ENCODE measurements at regions of chr18 and their contacts with region 1.

Region 1: GRCh38 chr18:21257386-21257785 is 15.4 kb downstream of the GREB1L start:
- DNase-seq: no peak
- ATAC-seq: no peak
- H3K4me3 ChIP-seq: no peak overlapping the region
- H3K27ac ChIP-seq: no peak overlapping the region
- H3K4me1 ChIP-seq: no peaks in the 10 kb centered on the region
- H3K27me3 ChIP-seq: no peaks in the 10 kb centered on the region

Region 2: DNA sequence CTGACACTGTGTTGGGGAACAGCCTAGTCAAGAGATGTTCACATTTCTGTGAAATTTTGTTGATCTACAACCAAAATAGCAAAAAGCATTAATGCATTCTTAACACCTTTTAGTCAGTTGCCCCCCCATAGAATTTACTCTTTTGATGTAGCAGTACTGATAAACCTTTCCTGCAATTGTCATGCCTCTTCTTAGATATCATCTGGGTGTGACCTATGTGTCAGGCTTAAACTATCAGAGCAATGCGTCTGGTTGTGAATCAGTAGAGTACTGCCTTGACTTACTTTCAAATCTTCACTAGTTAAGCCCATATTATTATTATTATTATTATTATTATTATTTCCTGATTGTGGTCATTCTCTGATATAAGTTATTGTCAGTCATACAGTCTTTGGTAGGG is 46.5 kb after region 1 on chr18:
- intact Hi-C with region 1: loop called in 1 of 2 experiments (anchors 10 kb)
- DNase-seq: no peak
- ATAC-seq: no peak
- H3K4me3 ChIP-seq: no peak overlapping the region
- H3K27ac ChIP-seq: no peak overlapping the region
- H3K4me1 ChIP-seq: peaks cover 2% of the 10 kb centered on the region in 2 donors
- H3K27me3 ChIP-seq: no peaks in the 10 kb centered on the region

Region 3: GRCh38 chr18:21786526-21786925 is 529.1 kb after region 1 on chr18:
- intact Hi-C with region 1: no loop called
- DNase-seq: no peak
- ATAC-seq: no peak
- H3K4me3 ChIP-seq: no peak overlapping the region
- H3K27ac ChIP-seq: no peak overlapping the region
- H3K4me1 ChIP-seq: no peaks in the 10 kb centered on the region
- H3K27me3 ChIP-seq: no peaks in the 10 kb centered on the region

Measured in aorta (tissue), 5 donors.